Activated CD4-positive, alpha-beta T cell treated with anti-CD3 and anti-CD28 coated beads for 36 hours (primary cell): ENCODE measurements at regions of chr1 and their contacts with region 1.

Region 1: GRCh38 chr1:26811057-26811456 is 15.4 kb upstream of the ZDHHC18 start:
- DNase-seq: no peak
- ATAC-seq: no peak
- H3K4me3 Mint-ChIP-seq: no peak overlapping the region
- H3K27ac Mint-ChIP-seq: no peak overlapping the region
- H3K4me1 Mint-ChIP-seq: peaks cover 17% of the 10 kb centered on the region
- H3K27me3 Mint-ChIP-seq: no peaks in the 10 kb centered on the region

Region 2: DNA sequence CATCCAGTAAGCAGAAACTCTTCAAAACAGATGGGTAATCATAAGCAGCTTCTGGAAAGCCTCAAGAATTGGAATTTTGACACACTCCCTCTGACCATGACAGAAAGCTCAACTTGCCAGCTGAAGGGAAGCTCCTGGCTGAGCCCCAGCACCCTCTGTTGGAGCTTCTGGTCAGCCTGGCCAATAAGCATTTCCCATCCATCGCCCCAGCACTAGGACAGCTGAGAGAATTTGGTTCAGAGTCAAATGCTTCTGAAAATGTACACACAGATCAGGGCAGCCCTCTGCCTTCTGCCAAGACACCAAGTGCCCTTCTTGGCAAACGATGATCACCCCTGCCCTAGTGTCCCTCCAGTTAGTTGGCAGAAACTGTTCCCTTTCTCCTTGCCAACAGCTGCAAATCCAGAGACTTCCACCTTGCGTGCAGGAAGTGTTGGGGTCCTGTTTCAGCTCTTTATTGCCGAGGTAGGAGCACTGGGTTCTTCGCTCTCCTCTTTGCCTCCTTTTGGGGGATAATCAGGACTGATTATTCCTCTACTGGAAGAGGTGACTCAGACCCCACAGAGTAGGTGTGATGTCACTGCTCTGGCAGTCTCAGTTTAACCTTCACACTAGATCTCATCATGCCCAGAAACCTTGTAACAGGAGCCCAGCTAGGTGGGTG is 11.4 kb before region 1 on chr1:
- CTCF ChIA-PET with region 1: interaction called, 24 read pairs
- POLR2A ChIA-PET with region 1: no interaction called
- intact Hi-C with region 1: no loop called
- DNase-seq: peak; percentile 48
- ATAC-seq: peak; percentile 78
- H3K4me3 Mint-ChIP-seq: no peak overlapping the region
- H3K27ac Mint-ChIP-seq: peak overlapping the region; percentile 90
- H3K4me1 Mint-ChIP-seq: peaks cover 37% of the 10 kb centered on the region
- H3K27me3 Mint-ChIP-seq: no peaks in the 10 kb centered on the region

Region 3: DNA sequence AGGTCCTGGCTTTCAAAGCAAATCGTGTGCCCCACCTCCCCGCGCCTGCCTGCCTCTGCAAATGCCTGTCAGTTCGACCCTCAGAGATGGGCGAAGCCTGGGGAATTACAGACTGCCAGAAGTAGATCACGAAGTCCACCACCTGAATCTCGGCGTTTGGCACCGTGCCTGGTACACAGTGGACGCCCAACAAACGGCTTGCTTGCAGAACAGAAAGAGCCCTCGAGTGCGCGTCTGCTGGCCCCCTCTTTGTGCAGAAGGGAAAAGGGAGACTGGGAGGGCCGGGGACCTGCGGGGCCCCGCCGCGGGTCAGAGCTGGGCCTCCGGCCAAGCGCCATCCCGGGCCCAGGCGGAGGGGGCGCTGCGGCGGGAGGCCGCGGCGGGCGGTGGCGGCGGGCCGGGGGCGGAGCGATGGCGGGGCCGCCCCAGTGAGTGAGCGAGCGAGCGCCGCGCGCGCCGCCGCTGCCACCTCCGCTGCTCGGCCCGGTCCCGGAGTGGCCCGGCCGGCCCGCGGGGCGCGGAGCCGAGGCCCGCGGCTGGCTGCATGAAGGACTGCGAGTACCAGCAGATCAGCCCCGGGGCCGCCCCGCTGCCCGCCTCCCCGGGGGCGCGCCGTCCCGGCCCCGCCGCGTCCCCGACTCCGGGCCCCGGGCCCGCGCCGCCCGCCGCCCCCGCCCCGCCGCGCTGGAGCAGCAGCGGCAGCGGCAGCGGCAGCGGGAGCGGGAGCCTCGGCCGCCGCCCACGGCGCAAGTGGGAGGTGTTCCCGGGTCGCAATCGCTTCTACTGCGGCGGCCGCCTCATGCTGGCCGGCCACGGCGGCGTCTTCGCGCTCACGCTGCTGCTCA is 15.4 kb after region 1 on chr1 and contains the start of gene ZDHHC18:
- CTCF ChIA-PET with region 1: interaction called, 12 read pairs
- POLR2A ChIA-PET with region 1: no interaction called
- intact Hi-C with region 1: loop called (anchors 1 to 2 kb)
- DNase-seq: peak; percentile 84
- ATAC-seq: peak; percentile 81
- H3K4me3 Mint-ChIP-seq: peak within 1 kb of the TSS; percentile 94
- H3K27ac Mint-ChIP-seq: peak within 1 kb of the TSS; percentile 93
- H3K4me1 Mint-ChIP-seq: peaks cover 52% of the 10 kb centered on the region
- H3K27me3 Mint-ChIP-seq: no peaks in the 10 kb centered on the region
- total RNA-seq, gene ZDHHC18: 51.6 to 66.0 TPM

Region 4: DNA sequence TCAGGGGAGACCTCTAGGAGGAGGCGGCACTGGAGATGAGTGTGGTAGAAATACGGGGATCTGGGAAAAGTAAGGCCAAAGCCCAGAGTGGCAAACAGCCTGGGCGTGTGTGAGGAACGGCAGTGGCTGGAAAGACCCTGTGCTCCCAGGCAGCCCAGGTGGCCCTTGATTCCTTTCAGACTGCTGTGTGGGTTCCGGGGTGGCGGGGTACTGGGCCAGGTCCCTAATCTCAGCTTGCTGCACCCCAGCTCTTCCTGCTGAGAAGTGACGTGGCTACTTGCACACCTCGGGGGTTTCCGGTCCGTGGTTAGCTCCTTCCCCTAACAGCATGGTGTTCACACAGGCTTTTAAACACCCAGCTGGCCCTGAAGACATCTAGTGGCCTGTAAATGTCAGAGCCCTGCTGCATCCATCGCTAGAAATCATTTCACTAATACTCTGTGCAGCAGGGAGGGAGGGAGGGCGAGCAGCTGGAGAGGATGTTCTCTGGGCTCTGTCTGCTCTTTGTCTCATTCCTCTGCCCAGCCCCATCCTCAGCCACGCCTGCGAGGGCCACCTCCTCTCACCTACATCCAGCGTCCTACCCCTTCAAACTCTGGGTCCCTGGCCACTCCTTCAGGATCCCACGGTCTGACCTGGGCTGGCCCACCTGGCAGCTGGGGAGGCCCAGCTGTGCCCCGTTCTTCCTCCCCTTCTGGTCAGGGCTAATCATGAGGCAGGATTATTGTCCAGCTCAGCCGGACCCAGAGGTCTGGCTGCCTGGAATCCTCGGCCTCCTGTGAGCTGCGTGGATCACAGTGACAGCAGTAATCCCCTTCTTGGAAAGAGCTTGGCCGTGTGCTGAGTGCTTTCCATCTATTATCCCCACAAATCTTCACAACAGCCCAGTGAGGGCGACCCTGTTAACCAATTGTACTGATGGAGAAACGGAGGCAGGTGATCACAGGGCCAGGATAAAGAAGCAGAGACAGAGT is 22.7 kb after region 1 on chr1:
- CTCF ChIA-PET with region 1: interaction called, 14 read pairs
- POLR2A ChIA-PET with region 1: interaction called, 20 read pairs
- intact Hi-C with region 1: no loop called
- DNase-seq: peak; percentile 93
- ATAC-seq: peak; percentile 95
- H3K4me3 Mint-ChIP-seq: peak overlapping the region; percentile 70
- H3K27ac Mint-ChIP-seq: peak overlapping the region; percentile 99
- H3K4me1 Mint-ChIP-seq: peaks cover 69% of the 10 kb centered on the region
- H3K27me3 Mint-ChIP-seq: no peaks in the 10 kb centered on the region

Region 5: DNA sequence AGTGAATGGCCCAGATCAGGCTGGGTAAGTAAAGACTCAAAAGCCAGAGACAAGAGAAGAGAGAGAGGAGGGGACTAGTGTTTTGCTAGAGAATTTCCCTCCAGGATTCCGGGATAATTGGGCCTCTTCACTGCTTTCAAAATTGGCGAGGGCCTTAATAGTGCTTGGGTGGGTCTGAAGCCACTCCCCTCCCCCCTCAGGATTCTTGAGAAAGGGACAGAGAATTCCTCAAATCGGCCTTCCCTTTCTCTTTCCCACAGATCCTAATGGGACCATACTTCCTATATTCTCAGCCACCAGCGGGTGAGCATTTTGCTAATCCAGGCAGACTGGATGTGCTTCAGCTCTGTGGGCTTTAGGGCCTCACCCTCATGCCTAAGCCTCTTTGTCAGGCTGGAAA is 63.8 kb after region 1 on chr1:
- CTCF ChIA-PET with region 1: interaction called, 13 read pairs
- POLR2A ChIA-PET with region 1: no interaction called
- intact Hi-C with region 1: loop called (anchors 1 kb)
- DNase-seq: no peak
- ATAC-seq: no peak
- H3K4me3 Mint-ChIP-seq: no peak overlapping the region
- H3K27ac Mint-ChIP-seq: no peak overlapping the region
- H3K4me1 Mint-ChIP-seq: peaks cover 2% of the 10 kb centered on the region
- H3K27me3 Mint-ChIP-seq: no peaks in the 10 kb centered on the region